ENCODE measurements at regions of chrX and their contacts with region 1.

Region 1: GRCh38 chrX:86935988-86936387 is 581.6 kb upstream of the KLHL4 start:
- DNase-seq: no peak
- H3K4me3 ChIP-seq: no peak overlapping the region
- CTCF ChIP-seq: no peak
- POLR2A ChIP-seq: no peak

Region 2: GRCh38 chrX:85666471-85666870 is 1269.5 kb before region 1 on chrX:
- intact Hi-C with region 1: no loop called
- DNase-seq: no peak
- H3K4me3 ChIP-seq: no peak overlapping the region
- CTCF ChIP-seq: no peak
- POLR2A ChIP-seq: no peak

Region 3: GRCh38 chrX:86887341-86887740 is 48.6 kb before region 1 on chrX:
- intact Hi-C with region 1: loop called (anchors 2 kb)
- DNase-seq: no peak
- H3K4me3 ChIP-seq: no peak overlapping the region
- CTCF ChIP-seq: no peak
- POLR2A ChIP-seq: no peak

Measured in lower leg skin (tissue), 4 donors.